AG04450 (cell line): ENCODE measurements at regions of chr9 and their contacts with region 1.

Region 1: GRCh38 chr9:131585375-131585774 is 40.1 kb downstream of the PRRT1B start:
- DNase-seq: no peak
- H3K4me3 ChIP-seq: no peak overlapping the region
- H3K27ac ChIP-seq: no peak overlapping the region
- H3K27me3 ChIP-seq: no peaks in the 10 kb centered on the region
- CTCF ChIP-seq: no peak

Region 2: DNA sequence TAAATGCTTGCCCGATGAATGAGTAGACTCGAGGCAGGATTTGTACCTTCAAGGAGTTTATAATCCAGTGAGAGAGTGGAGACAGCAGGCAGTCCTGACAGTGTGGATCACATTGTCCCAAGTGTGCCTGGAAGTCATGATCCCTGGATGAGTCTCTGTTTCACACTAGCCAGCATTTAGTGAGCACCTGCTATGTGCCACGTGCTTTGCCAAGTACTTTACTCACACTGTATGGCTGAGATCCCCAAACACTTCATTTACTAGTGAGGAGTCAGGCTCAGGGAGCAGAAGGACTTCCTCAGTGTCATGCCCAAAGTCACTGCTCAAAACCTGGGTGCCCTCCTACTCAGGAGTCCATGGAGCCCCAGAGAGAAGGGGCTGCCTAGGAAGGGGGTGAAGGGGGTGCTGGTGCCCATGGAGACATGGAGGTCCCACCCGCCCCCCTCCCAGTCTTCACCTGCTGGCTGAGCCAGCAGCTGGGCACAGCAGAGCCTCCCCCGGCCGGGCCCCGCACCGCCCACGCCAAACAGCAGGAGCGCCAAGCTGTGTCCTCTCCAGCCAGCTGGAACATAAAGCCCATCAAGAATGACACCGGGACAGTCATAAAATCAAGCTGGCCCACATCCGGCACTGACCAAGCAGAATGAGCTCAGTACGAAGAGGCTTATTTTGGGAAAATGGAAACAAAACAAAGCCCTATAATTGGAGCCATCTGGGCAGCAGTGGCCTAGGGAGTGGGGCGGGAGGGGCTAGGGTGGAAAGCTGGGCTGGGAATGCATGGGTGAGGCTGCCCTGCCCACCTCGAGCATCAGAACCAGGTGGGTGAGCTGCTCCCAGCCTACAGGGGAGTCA is 565.8 kb before region 1 on chr9:
- CTCF ChIA-PET with region 1: no interaction called
- POLR2A ChIA-PET with region 1: interaction called, 16 read pairs
- DNase-seq: no peak
- H3K4me3 ChIP-seq: no peak overlapping the region
- H3K27ac ChIP-seq: no peak overlapping the region
- H3K27me3 ChIP-seq: peaks cover 50% of the 10 kb centered on the region
- CTCF ChIP-seq: no peak

Region 3: DNA sequence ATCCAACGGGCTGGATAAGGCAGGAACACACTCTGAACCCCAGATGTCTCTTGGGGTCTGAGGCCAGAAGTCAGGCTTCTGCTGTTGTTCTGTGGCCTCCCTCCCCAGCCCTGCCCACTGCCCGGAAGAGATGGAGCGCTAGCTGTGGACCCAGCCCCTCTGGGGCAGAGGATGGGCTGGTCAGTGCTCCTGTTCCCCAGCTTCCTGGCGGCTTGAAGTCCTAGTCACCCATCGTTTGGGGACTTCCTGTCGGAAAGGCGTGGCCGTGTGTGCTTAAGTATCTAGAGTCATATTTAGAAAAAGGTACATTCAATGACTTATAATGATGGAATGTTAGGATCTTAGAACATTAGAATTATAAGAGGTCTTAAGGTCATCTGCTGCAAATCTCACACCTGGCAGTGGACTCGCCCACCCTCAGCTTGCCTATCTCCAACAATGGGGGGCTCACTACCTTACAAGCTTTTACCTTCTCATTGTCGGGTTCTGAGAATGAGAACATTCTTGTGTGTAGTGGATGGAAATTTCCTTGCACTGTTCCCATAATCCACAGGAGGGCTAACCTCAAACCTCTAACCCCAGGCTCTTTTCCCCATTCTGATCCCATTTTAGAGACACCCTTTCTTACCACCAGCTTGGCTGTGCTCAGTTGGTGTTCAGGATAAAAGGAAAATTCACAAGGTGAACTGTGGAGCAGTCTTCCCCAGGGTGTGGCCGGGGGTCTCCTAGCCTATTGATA is 502.4 kb before region 1 on chr9:
- CTCF ChIA-PET with region 1: no interaction called
- POLR2A ChIA-PET with region 1: no interaction called
- DNase-seq: no peak
- H3K4me3 ChIP-seq: no peak overlapping the region
- H3K27ac ChIP-seq: no peak overlapping the region
- H3K27me3 ChIP-seq: peaks cover 17% of the 10 kb centered on the region
- CTCF ChIP-seq: no peak